Posterior vena cava (tissue), 2 donors: ENCODE measurements at regions of chr5 and their contacts with region 1.

Region 1: GRCh38 chr5:75037135-75037534 is 15.2 kb downstream of the GCNT4 start:
- DNase-seq: no peak

Region 2: DNA sequence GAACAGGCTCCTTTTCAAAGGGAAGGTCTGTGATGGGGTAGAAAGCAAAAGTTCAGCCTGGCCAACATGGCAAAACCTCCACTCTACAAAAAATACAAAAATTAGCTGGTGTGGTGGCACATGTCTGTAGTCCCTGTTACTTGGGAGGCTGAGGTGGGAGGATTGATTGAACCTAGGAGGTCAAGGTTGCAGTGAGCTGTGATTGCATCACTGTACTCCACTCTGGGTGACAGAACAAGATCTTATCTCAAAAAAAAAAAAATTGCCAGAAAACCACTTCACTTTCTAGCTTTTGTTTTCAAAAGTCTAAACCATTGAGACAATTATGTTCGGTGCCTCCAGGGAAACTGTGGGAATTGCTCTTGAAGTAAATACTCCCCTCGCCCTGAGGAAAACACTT is 1856.2 kb after region 1 on chr5:
- intact Hi-C with region 1: loop called in 1 of 2 experiments (anchors 10 kb)
- DNase-seq: no peak